BJ (cell line): ENCODE measurements at regions of chr4 and their contacts with region 1.

Region 1: DNA sequence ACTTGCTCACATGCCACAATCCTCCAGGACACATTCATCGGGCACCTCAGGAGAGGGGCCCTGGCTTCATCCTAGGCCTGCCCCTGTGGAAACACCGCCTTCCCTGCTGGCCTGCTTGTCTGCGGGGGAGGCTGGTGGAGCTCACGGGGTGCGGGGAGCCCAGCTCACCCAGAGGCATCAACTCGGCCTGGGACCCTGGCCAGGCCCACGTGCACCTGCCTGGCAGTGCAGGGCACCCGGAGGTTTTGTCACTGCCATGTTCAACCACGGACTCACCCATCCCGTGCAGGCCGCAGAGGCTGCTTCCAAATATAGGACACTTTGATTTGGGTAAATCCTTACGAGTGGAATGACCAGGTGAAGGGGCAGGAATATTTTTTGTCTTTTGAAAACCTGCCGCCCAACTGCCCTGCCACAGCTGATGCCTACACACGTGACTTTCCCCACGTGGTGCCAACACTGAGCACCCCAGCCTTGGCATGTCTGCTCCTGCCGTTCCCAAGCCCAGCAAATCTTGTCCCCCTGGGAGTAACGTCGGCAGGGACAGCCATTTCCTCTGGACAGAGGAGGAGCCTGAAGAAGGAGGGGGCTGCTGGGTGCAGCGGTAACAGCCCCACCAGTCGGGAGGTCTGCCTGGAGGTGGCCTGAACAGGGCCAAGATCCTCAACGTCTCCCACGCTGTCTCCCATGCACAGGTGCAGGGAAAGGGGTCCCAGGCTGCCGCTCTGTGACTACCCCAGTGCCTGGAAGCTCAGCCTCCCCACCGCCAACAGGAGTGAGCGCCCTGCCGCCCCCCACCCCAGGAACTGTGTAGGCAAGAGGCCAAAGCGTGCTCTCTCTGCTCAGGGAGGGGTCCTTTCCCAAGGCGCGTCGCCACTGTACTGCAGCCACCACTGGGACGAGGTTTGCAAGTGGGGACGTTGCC is 8.5 kb downstream of the MXD4 start:
- DNase-seq: no peak
- H3K4me3 ChIP-seq: no peak overlapping the region
- H3K27me3 ChIP-seq: no peaks in the 10 kb centered on the region
- CTCF ChIP-seq: no peak

Region 2: DNA sequence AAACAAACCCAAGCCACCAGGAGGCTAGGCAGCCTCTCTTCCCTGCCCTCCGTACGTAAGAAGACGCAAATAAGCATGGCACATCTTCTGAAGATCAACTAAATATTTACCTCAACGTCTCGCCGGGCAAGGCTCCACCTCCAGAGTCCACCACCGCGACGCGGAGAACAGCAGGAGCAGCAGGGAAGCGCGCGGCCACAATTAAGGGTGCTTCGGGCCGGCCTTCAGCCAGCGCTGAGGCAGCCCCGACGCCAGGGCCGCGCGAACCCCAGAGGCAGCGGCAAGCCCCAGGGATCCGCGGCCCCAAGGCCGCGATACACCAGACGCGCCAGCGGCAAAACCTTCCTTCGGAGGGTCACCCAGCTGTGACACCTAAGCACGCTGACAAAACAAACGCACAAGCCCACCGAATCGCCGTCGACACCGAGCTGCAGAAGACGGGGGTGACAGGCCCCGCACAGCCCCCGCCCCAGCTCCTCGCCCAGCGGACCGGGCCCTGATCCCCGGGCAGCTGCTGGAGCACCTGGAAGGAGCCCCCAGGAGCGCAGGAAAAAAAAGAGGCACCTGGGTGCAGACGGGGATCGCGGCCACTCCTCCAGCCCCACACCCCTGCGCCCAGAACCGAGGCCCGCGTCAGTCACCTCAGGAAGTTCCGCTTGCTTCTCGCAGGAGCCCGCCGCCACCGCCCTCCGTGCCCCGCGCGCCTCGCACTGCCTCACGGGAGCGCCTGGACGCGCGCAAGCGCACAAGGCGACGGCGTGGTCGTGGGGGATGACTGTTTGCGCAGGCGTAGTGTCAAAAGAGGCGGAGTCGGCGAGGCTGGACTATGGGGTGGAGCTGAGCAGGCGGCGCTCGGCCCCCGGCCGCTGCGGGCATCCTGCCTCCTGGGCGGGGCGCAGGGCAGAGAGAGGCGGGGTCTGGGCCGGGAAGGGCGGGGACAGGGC is 11.7 kb before region 1 on chr4 and contains the starts of genes HAUS3 and POLN:
- CTCF ChIA-PET with region 1: no interaction called
- POLR2A ChIA-PET with region 1: interaction called, 19 read pairs
- DNase-seq: peak; percentile 73
- H3K4me3 ChIP-seq: peak within 1 kb of the TSS; percentile 84
- H3K27me3 ChIP-seq: no peaks in the 10 kb centered on the region
- CTCF ChIP-seq: no peak
- polyA plus RNA-seq, gene HAUS3: 1.9 and 4.0 TPM in 2 replicates
- polyA plus RNA-seq, gene POLN: 0.91 and 1.5 TPM in 2 replicates